ENCODE measurements at regions of chr15 and their contacts with region 1.

Region 1: DNA sequence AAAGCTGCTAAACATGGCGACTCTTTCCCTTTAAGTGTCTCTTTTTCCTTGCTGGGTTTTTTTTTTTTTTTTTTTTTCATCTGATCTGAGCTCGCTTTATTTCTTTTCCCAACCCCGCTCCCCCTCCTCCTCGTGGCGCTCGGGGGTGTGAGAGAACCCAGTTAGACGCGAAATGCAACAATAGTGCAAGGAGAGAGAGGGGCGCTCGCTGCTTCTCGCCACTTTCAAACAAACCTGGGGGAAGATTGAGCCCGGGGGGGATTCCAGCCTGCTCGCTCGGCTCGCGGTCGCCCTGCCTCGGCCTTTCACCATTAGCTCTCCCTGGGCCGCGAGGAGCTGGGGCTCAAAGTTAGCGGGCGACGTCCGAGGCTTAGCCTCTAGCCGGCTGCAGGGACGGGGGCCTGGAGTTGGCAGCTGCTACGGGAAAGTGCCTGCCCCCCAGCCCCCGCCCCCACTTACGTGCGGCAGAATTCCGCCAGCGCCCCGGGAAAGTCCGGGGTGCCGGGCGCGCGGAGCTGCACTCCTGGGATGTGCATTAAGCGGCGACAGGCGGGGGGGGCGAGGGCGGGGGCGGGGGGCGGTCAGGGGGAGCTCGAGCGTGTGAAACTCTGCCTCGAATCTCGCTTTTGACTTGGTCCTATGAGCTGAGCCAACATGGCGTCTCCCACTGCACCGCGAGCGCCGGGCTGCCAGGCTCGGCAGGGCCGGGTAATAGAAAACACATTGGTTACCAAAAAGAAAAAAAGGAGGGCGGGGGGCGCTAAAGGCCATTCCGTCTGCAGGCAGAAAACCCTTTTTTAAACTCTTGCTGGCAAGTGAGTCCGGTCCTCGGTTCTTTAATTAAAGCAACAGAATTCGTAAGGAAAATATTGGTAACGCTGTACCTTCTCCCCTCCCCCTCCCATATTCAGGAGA is 10.4 kb downstream of the NR2F2 start:
- DNase-seq: peak; percentile 67 to 82
- H3K4me3 ChIP-seq: peak overlapping the region; percentile 67 to 85
- H3K27ac ChIP-seq: peak overlapping the region; percentile 99
- H3K4me1 ChIP-seq: peaks cover 21% of the 10 kb centered on the region
- H3K27me3 ChIP-seq: no peaks in the 10 kb centered on the region
- CTCF ChIP-seq: no peak
- POLR2A ChIP-seq: no peak

Region 2: GRCh38 chr15:94670438-94671034 is 1670.3 kb before region 1 on chr15:
- intact Hi-C with region 1: loop called (anchors 5 kb)
- DNase-seq: no peak
- H3K4me3 ChIP-seq: no peak overlapping the region
- H3K27ac ChIP-seq: peak overlapping the region; percentile 63
- H3K4me1 ChIP-seq: peaks cover 12% of the 10 kb centered on the region
- H3K27me3 ChIP-seq: no peaks in the 10 kb centered on the region
- CTCF ChIP-seq: peak; percentile 16 to 79 (median 63)
- POLR2A ChIP-seq: no peak

Region 3: DNA sequence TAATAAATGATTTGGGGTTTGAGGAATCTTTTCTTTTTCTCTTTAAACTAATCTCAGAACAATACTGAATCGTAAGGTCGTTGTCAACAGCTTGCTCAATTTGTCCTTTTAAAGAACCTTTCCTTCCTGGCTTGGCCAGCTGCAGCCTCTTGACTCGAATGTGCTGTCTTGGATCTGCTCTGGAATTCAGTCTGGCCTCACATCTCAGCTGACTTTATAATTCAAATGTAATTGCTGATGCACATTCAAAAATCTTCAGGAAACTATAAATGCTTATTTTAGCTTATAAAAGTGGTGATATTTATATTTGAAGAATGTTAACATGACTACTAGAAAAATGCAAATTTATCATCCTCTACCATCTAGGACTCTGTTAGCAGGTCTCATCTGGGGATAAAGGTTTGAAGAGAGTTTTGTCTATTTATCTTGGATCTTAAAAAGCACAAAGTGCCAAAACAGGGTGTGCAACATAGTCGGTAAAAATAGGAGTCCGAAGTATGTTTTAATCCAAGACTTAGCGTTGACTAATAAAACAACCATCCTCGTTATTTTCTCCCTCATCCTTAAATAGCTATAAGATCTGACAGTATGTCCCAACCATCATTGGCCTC is 1074.3 kb before region 1 on chr15:
- intact Hi-C with region 1: loop called (anchors 5 kb)
- DNase-seq: no peak
- H3K4me3 ChIP-seq: no peak overlapping the region
- H3K27ac ChIP-seq: peak overlapping the region; percentile 64
- H3K4me1 ChIP-seq: peaks cover 52% of the 10 kb centered on the region
- H3K27me3 ChIP-seq: no peaks in the 10 kb centered on the region
- CTCF ChIP-seq: no peak
- POLR2A ChIP-seq: no peak

Region 4: GRCh38 chr15:95326431-95327182 is 1014.2 kb before region 1 on chr15:
- intact Hi-C with region 1: loop called (anchors 5 kb)
- DNase-seq: no peak
- H3K4me3 ChIP-seq: peak overlapping the region; percentile 52 to 65
- H3K27ac ChIP-seq: peak overlapping the region; percentile 90
- H3K4me1 ChIP-seq: no peaks in the 10 kb centered on the region
- H3K27me3 ChIP-seq: no peaks in the 10 kb centered on the region
- CTCF ChIP-seq: no peak
- POLR2A ChIP-seq: no peak

Region 5: GRCh38 chr15:95604634-95605036 is 736.2 kb before region 1 on chr15:
- intact Hi-C with region 1: loop called (anchors 5 kb)
- DNase-seq: no peak
- H3K4me3 ChIP-seq: no peak overlapping the region
- H3K27ac ChIP-seq: peak overlapping the region; percentile 15
- H3K4me1 ChIP-seq: peaks cover 20% of the 10 kb centered on the region
- H3K27me3 ChIP-seq: no peaks in the 10 kb centered on the region
- CTCF ChIP-seq: no peak
- POLR2A ChIP-seq: no peak

Region 6: GRCh38 chr15:96672629-96673028 is 331.8 kb after region 1 on chr15:
- intact Hi-C with region 1: no loop called
- DNase-seq: no peak
- H3K4me3 ChIP-seq: no peak overlapping the region
- H3K27ac ChIP-seq: no peak overlapping the region
- H3K4me1 ChIP-seq: no peaks in the 10 kb centered on the region
- H3K27me3 ChIP-seq: no peaks in the 10 kb centered on the region
- CTCF ChIP-seq: no peak
- POLR2A ChIP-seq: no peak

Measured in vagina (tissue), 2 donors.